K562 (cell line): ENCODE measurements at regions of chr14 and their contacts with region 1.

Region 1: GRCh38 chr14:22973217-22974032 is 8.9 kb downstream of the AJUBA start:
- DNase-seq: peak; percentile 43 to 75 (median 54)
- ATAC-seq: peak; percentile 77
- H3K4me3 ChIP-seq: no peak overlapping the region
- H3K27ac ChIP-seq: no peak overlapping the region
- H3K4me1 ChIP-seq: peaks cover 19 to 21% of the 10 kb centered on the region in 2 experiments
- H3K27me3 ChIP-seq: no peaks in the 10 kb centered on the region
- CTCF ChIP-seq: peak; percentile 81 to 83 (median 81)
- EP300 ChIP-seq: no peak
- POLR2A ChIP-seq: no peak
- RAD21 ChIP-seq: peak; percentile 69 to 88

Region 2: DNA sequence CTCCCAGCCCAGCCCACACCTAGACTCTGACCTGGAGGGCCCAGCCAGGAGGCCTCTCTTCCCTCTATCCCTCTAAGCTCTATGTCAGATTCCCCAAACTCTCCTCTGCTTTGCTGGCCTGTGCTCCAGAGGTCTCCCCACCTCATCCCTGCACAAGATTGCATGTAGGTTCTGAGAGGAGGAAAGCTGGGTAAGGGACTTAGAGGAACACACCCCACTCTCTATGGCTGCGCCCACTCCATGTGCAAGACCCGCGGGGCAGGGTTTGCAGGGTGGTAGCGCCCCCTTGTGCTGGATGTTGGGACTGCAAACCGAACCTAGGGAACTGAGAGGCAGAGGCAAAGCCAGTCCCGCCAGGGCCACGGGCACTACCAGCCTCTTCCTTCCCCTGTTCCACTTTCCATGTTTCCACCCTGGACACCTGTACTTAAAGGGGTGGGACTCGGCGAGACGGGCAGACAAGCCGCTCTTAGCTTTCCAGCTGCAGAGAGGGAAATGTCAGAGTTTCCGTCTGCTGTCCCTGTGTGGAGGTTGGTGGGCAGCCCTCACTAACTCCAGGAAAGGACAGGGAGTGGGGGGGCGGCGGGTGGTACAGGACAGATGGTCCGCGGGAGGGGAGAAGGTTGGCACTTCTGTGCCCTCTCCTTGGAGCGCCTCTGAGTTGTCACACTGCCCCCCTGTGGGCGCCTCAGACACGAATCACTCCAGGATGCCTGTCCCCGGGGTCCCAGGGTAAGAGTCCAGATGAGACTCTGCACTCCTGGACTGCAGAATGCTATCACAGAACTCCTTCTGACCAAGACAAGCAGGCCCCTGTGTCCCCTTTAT is 120.3 kb before region 1 on chr14:
- CTCF ChIA-PET with region 1: no interaction called
- POLR2A ChIA-PET with region 1: no interaction called
- in situ Hi-C with region 1: no loop called
- intact Hi-C with region 1: no loop called
- DNase-seq: peak; percentile 81 to 88 (median 86)
- ATAC-seq: peak; percentile 95
- H3K4me3 ChIP-seq: peak overlapping the region; percentile 47
- H3K27ac ChIP-seq: peak overlapping the region; percentile 86
- H3K4me1 ChIP-seq: peaks cover under 1 to 23% of the 10 kb centered on the region in 2 experiments; a peak in 3 of 5 replicates
- H3K27me3 ChIP-seq: no peaks in the 10 kb centered on the region
- CTCF ChIP-seq: peak; percentile 94 to 97 (median 95)
- EP300 ChIP-seq: no peak
- POLR2A ChIP-seq: no peak
- RAD21 ChIP-seq: peak; percentile 97 to 99

Region 3: DNA sequence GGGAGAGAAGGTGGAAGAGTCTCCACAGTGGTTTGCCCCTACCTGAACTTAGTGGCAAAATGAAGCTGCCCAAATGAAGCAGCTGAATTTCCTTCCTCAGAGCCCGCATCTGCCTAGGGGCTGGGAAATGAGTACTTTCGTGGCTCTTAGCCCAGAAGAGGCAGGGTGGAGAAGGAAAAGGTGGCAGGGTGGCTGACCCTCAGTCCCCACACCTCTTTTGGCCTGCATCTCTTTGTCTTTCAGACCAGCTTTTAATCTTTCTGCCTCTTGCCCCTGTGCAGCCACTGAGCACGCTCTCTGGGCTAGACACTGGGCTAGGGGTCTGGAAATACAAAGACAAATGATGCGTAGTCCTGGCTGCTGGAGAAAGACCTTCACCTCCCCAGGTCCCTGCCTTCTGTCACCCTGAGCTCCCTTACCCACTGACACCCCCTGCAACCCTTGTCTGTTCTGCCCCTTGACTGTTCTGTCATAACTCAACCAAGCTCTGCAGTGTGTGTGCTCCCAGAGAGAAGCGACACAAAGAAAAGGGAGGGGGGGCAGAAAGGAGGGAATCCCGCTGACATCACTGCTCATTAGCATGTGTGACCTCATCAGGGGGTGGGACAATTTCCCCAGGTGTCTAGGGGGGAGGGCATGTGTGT is 90.8 kb before region 1 on chr14:
- CTCF ChIA-PET with region 1: no interaction called
- POLR2A ChIA-PET with region 1: no interaction called
- in situ Hi-C with region 1: no loop called
- intact Hi-C with region 1: no loop called
- DNase-seq: peak; percentile 77 to 88 (median 82)
- ATAC-seq: peak; percentile 64
- H3K4me3 ChIP-seq: no peak overlapping the region
- H3K27ac ChIP-seq: no peak overlapping the region
- H3K4me1 ChIP-seq: peaks cover 20 to 31% of the 10 kb centered on the region in 2 experiments
- H3K27me3 ChIP-seq: no peaks in the 10 kb centered on the region
- CTCF ChIP-seq: no peak
- EP300 ChIP-seq: no peak
- POLR2A ChIP-seq: no peak
- RAD21 ChIP-seq: no peak

Region 4: DNA sequence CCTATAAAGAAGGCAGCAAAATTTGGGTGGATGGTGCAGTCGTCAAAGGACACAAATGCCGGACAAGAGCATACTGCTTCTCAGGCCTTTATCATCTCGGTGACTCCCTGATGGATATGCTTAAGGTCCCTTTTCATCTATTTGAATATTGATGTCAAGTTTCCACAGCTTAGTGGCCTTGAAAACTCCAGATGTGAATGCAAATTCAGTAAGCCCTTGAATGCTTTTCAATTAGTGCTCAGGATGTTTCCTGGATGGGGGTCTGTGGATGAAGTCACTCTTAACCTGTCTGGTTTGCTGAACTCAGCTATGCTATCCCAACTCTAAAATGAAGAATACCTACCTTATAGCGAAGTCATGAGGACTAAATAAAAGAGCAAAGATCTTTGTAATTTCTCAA is 79.7 kb before region 1 on chr14:
- CTCF ChIA-PET with region 1: no interaction called
- POLR2A ChIA-PET with region 1: no interaction called
- in situ Hi-C with region 1: no loop called
- intact Hi-C with region 1: no loop called
- DNase-seq: no peak
- ATAC-seq: no peak
- H3K4me3 ChIP-seq: no peak overlapping the region
- H3K27ac ChIP-seq: no peak overlapping the region
- H3K4me1 ChIP-seq: peaks cover 13 to 31% of the 10 kb centered on the region in 2 experiments; a peak in 3 of 5 replicates
- H3K27me3 ChIP-seq: no peaks in the 10 kb centered on the region
- CTCF ChIP-seq: no peak
- EP300 ChIP-seq: no peak
- POLR2A ChIP-seq: no peak
- RAD21 ChIP-seq: no peak

Region 5: DNA sequence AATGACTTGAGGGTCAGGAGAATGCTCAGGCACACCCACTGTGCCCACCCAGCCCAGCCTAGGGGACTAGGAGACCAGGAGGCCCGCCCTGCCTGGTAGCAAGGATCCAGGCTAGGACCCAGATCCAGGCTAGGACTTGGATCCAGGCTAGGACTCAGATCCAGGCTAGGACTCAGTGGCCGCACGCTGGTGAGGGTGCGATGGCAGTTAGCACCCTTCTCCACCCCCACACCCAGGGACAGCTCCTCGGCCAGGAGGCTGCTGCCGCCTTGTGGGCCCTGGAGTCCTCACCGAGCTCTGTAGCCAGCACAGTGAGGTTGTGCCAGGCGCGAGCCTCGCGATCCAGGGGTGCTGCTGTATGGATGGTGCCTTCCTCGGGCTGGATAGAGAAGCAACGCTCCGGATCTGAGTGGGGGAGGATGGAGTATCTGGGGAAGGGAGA is 78.8 kb after region 1 on chr14:
- CTCF ChIA-PET with region 1: interaction called, 27 read pairs
- POLR2A ChIA-PET with region 1: interaction called, 4 read pairs
- in situ Hi-C with region 1: loop called (anchors 5 kb)
- intact Hi-C with region 1: no loop called
- DNase-seq: peak; percentile 38 to 60 (median 53)
- ATAC-seq: peak; percentile 60
- H3K4me3 ChIP-seq: no peak overlapping the region
- H3K27ac ChIP-seq: no peak overlapping the region
- H3K4me1 ChIP-seq: peaks cover 11 to 39% of the 10 kb centered on the region in 2 experiments
- H3K27me3 ChIP-seq: no peaks in the 10 kb centered on the region
- CTCF ChIP-seq: peak; percentile 73 to 82 (median 77)
- EP300 ChIP-seq: no peak
- POLR2A ChIP-seq: no peak
- RAD21 ChIP-seq: peak; percentile 66 to 89

Region 6: DNA sequence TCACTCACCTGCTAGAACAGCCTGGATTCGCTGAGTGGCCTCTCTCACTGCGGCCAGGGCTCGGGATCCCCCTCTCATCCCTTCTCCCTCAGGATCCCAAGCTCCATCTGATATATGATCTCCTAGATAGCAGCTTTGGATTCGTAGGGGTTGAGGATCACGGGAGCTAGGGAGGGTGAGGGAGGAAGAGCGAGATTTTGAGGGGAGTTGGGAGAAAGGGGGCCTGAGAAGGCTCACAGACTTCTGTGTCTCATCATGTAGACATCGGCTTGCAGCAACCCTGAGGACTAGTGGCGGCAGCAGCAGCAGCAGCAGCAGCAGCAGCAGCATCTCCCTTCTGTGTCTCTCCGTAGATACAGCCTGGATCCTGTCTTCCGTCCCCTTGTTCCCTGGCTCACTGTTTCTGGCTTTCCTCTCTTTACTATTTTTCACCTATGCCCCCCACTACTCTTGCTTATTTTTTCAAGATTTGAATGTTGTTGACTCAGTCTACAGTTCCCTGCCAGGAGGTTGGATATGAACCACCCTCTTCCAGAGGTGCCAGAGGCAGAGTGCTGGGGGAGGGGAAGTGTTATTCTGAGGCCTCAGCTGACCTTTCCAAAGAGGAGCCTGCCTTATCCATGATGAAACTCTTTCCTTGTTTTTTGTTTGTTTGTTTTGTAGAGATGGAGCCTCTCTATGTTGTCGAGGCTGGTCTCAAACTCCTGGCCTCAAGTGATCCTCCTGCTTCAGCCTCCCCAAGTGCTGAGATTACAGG is 131.3 kb after region 1 on chr14 and contains the start of gene CIROP:
- CTCF ChIA-PET with region 1: no interaction called
- POLR2A ChIA-PET with region 1: no interaction called
- in situ Hi-C with region 1: no loop called
- intact Hi-C with region 1: loop called (anchors 5 kb)
- DNase-seq: peak in 1 of 4 experiments; percentile 6
- ATAC-seq: no peak
- H3K4me3 ChIP-seq: no peak within 1 kb of the TSS
- H3K27ac ChIP-seq: no peak within 1 kb of the TSS
- H3K4me1 ChIP-seq: peaks cover 4 to 8% of the 10 kb centered on the region in 2 experiments; a peak in 4 of 5 replicates
- H3K27me3 ChIP-seq: no peaks in the 10 kb centered on the region
- CTCF ChIP-seq: no peak
- EP300 ChIP-seq: no peak
- POLR2A ChIP-seq: no peak
- RAD21 ChIP-seq: no peak
- polyA plus RNA-seq, gene CIROP: not detected